PC-9 (cell line): ENCODE measurements at regions of chr14 and their contacts with region 1.

Region 1: GRCh38 chr14:77301103-77301502 is 19.6 kb downstream of the POMT2 start:
- DNase-seq: peak in 1 of 2 experiments; percentile 49
- H3K4me3 ChIP-seq: no peak overlapping the region
- H3K27ac ChIP-seq: no peak overlapping the region
- H3K4me1 ChIP-seq: peaks cover 32% of the 10 kb centered on the region
- H3K27me3 ChIP-seq: no peaks in the 10 kb centered on the region
- CTCF ChIP-seq: peak; percentile 86

Region 2: GRCh38 chr14:77409131-77409533 is 108.0 kb after region 1 on chr14:
- CTCF ChIA-PET with region 1: no interaction called
- POLR2A ChIA-PET with region 1: no interaction called
- intact Hi-C with region 1: no loop called
- DNase-seq: no peak
- H3K4me3 ChIP-seq: no peak overlapping the region
- H3K27ac ChIP-seq: no peak overlapping the region
- H3K4me1 ChIP-seq: 0 out of 2 replicates have a peak, but pooled peaks cover 7% of the 10 kb centered on the region
- H3K27me3 ChIP-seq: no peaks in the 10 kb centered on the region
- CTCF ChIP-seq: peak; percentile 49; the same call in 1 of the 2 replicates

Region 3: DNA sequence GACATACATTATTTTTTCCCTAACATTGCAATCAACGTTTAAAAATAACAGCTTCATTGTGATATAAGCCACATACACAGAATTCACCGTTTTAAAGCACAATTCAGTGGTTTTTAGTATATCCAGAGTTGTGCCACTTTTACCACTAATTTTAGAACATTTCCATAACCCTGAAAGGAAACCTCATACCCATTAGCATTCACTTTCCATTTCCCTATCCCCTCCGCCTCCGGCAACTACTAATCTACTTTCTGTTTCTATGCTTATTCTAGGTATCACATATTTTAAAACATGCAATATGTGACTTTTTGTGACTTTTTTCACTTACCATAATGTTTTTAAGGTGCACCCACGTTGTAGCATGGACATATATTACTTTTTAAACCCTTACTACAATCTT is 253.1 kb after region 1 on chr14:
- CTCF ChIA-PET with region 1: no interaction called
- POLR2A ChIA-PET with region 1: no interaction called
- intact Hi-C with region 1: loop called (anchors 2 kb)
- DNase-seq: no peak
- H3K4me3 ChIP-seq: no peak overlapping the region
- H3K27ac ChIP-seq: no peak overlapping the region
- H3K4me1 ChIP-seq: no peaks in the 10 kb centered on the region
- H3K27me3 ChIP-seq: no peaks in the 10 kb centered on the region
- CTCF ChIP-seq: no peak

Region 4: DNA sequence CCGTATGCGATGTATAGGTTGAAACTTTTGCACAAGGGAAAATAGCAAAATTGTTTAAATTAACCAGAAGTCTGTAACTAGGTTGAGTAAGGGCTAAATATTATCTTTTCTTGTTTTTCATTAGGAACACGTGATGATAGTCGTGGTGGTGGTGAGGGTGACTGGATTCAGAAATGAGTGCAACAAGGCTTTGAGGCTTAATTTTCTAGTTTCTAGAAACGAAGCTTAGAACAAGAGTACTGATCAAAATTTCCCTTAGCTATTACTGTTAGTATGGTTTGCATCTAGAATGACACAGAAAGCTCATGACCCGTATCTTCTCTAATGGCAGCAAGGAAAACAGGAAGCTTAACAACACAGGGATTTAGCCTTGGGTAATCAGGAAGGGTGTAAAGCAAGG is 413.8 kb after region 1 on chr14:
- CTCF ChIA-PET with region 1: interaction called, 10 read pairs
- POLR2A ChIA-PET with region 1: no interaction called
- intact Hi-C with region 1: no loop called
- DNase-seq: no peak
- H3K4me3 ChIP-seq: no peak overlapping the region
- H3K27ac ChIP-seq: no peak overlapping the region
- H3K4me1 ChIP-seq: peaks cover 5% of the 10 kb centered on the region; the same call in 1 of the 2 replicates
- H3K27me3 ChIP-seq: no peaks in the 10 kb centered on the region
- CTCF ChIP-seq: no peak